ENCODE measurements at regions of chr9 and their contacts with region 1.

Region 1: GRCh38 chr9:100167915-100168654 is 69.0 kb downstream of the INVS start:
- DNase-seq: no peak
- ATAC-seq: no peak
- H3K4me3 ChIP-seq: no peak overlapping the region
- H3K27ac ChIP-seq: no peak overlapping the region
- H3K4me1 ChIP-seq: no peaks in the 10 kb centered on the region
- H3K27me3 ChIP-seq: no peaks in the 10 kb centered on the region
- CTCF ChIP-seq: no peak

Region 2: GRCh38 chr9:100186356-100186755 is 18.3 kb after region 1 on chr9:
- CTCF ChIA-PET with region 1: no interaction called
- POLR2A ChIA-PET with region 1: interaction called, 11 read pairs
- in situ Hi-C with region 1: no loop called
- intact Hi-C with region 1: no loop called
- DNase-seq: no peak
- ATAC-seq: no peak
- H3K4me3 ChIP-seq: no peak overlapping the region
- H3K27ac ChIP-seq: no peak overlapping the region
- H3K4me1 ChIP-seq: no peaks in the 10 kb centered on the region
- H3K27me3 ChIP-seq: no peaks in the 10 kb centered on the region
- CTCF ChIP-seq: no peak

Region 3: GRCh38 chr9:100197581-100197980 is 29.5 kb after region 1 on chr9:
- CTCF ChIA-PET with region 1: no interaction called
- POLR2A ChIA-PET with region 1: no interaction called
- in situ Hi-C with region 1: no loop called
- intact Hi-C with region 1: no loop called
- DNase-seq: no peak
- ATAC-seq: no peak
- H3K4me3 ChIP-seq: no peak overlapping the region
- H3K27ac ChIP-seq: no peak overlapping the region
- H3K4me1 ChIP-seq: no peaks in the 10 kb centered on the region
- H3K27me3 ChIP-seq: no peaks in the 10 kb centered on the region
- CTCF ChIP-seq: no peak

Measured in Panc1 (cell line).